Heart right ventricle (tissue), 16 donors: ENCODE measurements at regions of chr17 and their contacts with region 1.

Region 1: DNA sequence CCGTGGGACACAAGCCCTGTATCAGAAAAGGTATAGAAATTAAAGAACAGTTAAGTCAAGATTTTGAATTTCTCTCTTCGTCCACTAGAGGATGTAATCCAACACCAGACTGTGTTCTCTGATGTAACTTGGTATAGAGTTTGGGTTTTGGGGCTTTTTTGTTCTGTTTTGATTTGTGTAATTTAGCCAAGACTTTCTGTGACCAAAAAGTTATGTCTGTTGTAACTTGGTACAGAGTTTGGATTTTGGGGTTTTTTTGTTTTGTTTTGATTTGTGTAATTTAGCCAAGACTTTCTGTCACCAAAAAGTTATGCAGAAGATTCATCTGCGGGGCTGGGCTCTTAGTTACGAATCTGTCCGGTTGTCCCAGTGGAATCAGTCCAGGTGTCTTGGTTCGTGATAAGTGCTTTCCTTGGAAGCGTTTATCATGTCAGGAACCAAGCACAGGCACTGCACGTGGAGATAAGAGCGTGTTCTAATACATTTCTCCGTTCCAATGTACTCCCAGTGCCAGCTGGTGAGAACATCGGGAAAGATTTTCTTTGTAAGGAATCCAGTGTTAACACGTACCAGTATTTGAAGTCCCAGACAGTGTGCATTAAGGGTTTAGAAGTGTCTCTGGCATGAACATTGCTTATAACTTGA is 44.1 kb upstream of the SEC14L1 start:
- DNase-seq: no peak
- ATAC-seq: peak; percentile 18 to 72 (median 63)
- H3K4me3 ChIP-seq: peak overlapping the region in 1 of 10 donors; percentile 5
- H3K27ac ChIP-seq: peak overlapping the region; percentile 68 to 92 (median 84)
- H3K4me1 ChIP-seq: peaks cover 4 to 45% (median 41%) of the 10 kb centered on the region in 9 donors
- H3K27me3 ChIP-seq: no peaks in the 10 kb centered on the region
- CTCF ChIP-seq: peak; percentile 57 to 89 (median 75)

Region 2: DNA sequence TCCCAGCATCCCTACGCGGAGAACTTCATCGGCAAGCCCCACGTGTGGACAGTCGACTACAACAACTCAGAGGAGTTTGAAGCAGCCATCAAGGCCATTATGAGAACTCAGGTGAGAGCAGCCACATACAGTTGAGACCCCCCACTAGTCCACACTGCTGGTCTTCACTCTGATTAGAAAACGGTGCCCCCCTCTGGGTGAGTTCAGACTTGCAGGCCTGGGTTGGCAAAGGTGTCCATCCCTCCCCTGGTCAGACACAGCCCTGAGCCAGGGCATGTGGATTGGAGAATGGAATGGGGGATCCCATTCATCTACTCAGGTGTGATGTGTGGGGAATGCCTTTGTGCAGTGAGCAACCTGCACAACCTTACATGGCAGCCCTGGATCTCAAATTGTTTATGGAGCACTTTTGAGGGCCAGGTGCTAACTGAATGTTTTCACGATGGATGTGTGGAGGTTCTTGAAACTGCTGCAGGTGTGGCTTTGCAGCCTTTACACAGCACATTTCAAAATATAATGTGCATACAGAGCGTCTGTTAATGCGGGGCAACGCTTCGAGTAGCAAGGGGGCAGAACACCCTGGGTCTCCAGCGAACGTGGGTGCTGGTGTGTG is 155.8 kb before region 1 on chr17:
- intact Hi-C with region 1: no loop called
- DNase-seq: no peak
- ATAC-seq: no peak
- H3K4me3 ChIP-seq: no peak overlapping the region
- H3K27ac ChIP-seq: no peak overlapping the region
- H3K4me1 ChIP-seq: no peaks in the 10 kb centered on the region
- H3K27me3 ChIP-seq: peaks cover 0 to 62% (median 31%) of the 10 kb centered on the region in 7 donors
- CTCF ChIP-seq: peak in 1 of 9 donors; percentile 16

Region 3: GRCh38 chr17:77140166-77140878 is 43.6 kb after region 1 on chr17:
- intact Hi-C with region 1: loop called in 8 of 10 experiments (anchors 5 to 10 kb)
- DNase-seq: peak; percentile 99 to 100
- ATAC-seq: peak; percentile 96 to 99 (median 98)
- H3K4me3 ChIP-seq: peak overlapping the region; percentile 49 to 89 (median 76)
- H3K27ac ChIP-seq: peak overlapping the region; percentile 89 to 97 (median 96)
- H3K4me1 ChIP-seq: peaks cover 4 to 75% (median 18%) of the 10 kb centered on the region in 9 donors
- H3K27me3 ChIP-seq: no peaks in the 10 kb centered on the region
- CTCF ChIP-seq: peak in 2 of 9 donors; percentile 13

Region 4: GRCh38 chr17:77145612-77146245 is 49.0 kb after region 1 on chr17:
- intact Hi-C with region 1: loop called in 7 of 10 experiments (anchors 5 to 10 kb)
- DNase-seq: peak; percentile 46 to 75
- ATAC-seq: peak; percentile 19 to 68 (median 55)
- H3K4me3 ChIP-seq: peak overlapping the region; percentile 18 to 91 (median 74)
- H3K27ac ChIP-seq: peak overlapping the region; percentile 69 to 96 (median 92)
- H3K4me1 ChIP-seq: peaks cover 11 to 89% (median 52%) of the 10 kb centered on the region in 9 donors
- H3K27me3 ChIP-seq: no peaks in the 10 kb centered on the region
- CTCF ChIP-seq: peak in 5 of 9 donors; percentile 17 to 57 (median 42)

Region 5: DNA sequence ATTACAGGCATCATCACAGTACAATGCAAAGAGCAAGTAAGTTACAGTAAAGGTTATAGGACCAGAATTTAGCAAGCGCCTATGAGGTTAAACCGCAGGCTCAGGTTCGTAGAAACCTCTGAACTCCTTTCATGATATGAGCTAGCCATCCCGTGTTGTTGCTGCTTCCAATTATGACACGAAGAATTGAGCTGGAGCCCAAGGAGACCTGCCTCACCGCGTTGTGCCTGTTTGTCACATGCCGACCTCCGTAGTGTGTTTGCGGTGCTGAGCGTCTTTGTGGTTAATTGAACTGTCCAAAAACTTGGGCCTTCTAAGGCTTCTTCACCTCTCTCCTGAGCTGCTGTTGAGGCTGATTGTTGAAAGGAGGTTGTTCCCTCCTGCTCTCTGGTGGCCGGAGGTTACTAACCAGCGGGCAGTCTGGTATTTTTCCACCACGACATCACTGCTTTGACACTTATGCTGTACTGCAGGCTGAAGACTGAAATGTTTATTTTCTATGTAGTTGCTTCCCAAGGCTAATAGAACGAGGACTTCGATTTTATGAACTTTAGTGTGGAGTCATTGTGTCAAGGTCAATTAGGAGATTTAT is 111.6 kb after region 1 on chr17:
- intact Hi-C with region 1: loop called in 9 of 10 experiments (anchors 1 to 10 kb)
- DNase-seq: peak in 1 of 2 donors; percentile 47
- ATAC-seq: peak; percentile 48 to 76 (median 70)
- H3K4me3 ChIP-seq: no peak overlapping the region
- H3K27ac ChIP-seq: peak overlapping the region in 9 of 10 donors; percentile 3 to 77 (median 45)
- H3K4me1 ChIP-seq: peaks cover 13 to 91% (median 63%) of the 10 kb centered on the region in 9 donors
- H3K27me3 ChIP-seq: no peaks in the 10 kb centered on the region
- CTCF ChIP-seq: peak in 8 of 9 donors; percentile 8 to 61 (median 44)

Region 6: GRCh38 chr17:77214743-77215142 is 118.1 kb after region 1 on chr17:
- intact Hi-C with region 1: loop called in 8 of 10 experiments (anchors 2 to 10 kb)
- DNase-seq: peak in 1 of 2 donors; percentile 54
- ATAC-seq: peak; percentile 33 to 79 (median 68)
- H3K4me3 ChIP-seq: no peak overlapping the region
- H3K27ac ChIP-seq: peak overlapping the region in 1 of 10 donors; percentile 24
- H3K4me1 ChIP-seq: peaks cover 7 to 68% (median 30%) of the 10 kb centered on the region in 9 donors
- H3K27me3 ChIP-seq: no peaks in the 10 kb centered on the region
- CTCF ChIP-seq: peak in 8 of 9 donors; percentile 18 to 69 (median 54)

Region 7: GRCh38 chr17:77235370-77235941 is 138.8 kb after region 1 on chr17:
- intact Hi-C with region 1: no loop called
- DNase-seq: no peak
- ATAC-seq: peak in 7 of 8 donors; percentile 36 to 85 (median 58)
- H3K4me3 ChIP-seq: peak overlapping the region in 7 of 10 donors; percentile 1 to 42 (median 35)
- H3K27ac ChIP-seq: peak overlapping the region; percentile 10 to 89 (median 72)
- H3K4me1 ChIP-seq: peaks cover 0 to 38% (median 22%) of the 10 kb centered on the region in 9 donors
- H3K27me3 ChIP-seq: no peaks in the 10 kb centered on the region
- CTCF ChIP-seq: no peak

Region 8: GRCh38 chr17:77247048-77247541 is 150.4 kb after region 1 on chr17:
- intact Hi-C with region 1: loop called in 3 of 10 experiments (anchors 1 to 5 kb)
- DNase-seq: peak; percentile 81 to 90
- ATAC-seq: peak; percentile 86 to 94 (median 90)
- H3K4me3 ChIP-seq: peak overlapping the region; percentile 34 to 75 (median 64)
- H3K27ac ChIP-seq: peak overlapping the region in 9 of 10 donors; percentile 1 to 83 (median 63)
- H3K4me1 ChIP-seq: peaks cover 8 to 28% (median 12%) of the 10 kb centered on the region in 9 donors
- H3K27me3 ChIP-seq: peaks cover 0 to 22% (median 0%) of the 10 kb centered on the region in 7 donors
- CTCF ChIP-seq: peak; percentile 96 to 100 (median 99)